Naive thymus-derived CD4-positive, alpha-beta T cell (primary cell): ENCODE measurements at regions of chr20 and their contacts with region 1.

Region 1: GRCh38 chr20:23350196-23350903 is at the start of gene NXT1:
- DNase-seq: peak; percentile 92 to 98 (median 95)
- ATAC-seq: peak; percentile 91
- H3K4me3 ChIP-seq: peak within 1 kb of the TSS; percentile 99
- H3K4me3 Mint-ChIP-seq: peak within 1 kb of the TSS; percentile 84 to 100 (median 98)
- H3K27ac ChIP-seq: peak within 1 kb of the TSS; percentile 99
- H3K27ac Mint-ChIP-seq: peak within 1 kb of the TSS; percentile 98 to 100 (median 100)
- H3K4me1 ChIP-seq: peaks cover 19 to 20% of the 10 kb centered on the region in 2 donors
- H3K4me1 Mint-ChIP-seq: peaks cover 12 to 36% (median 26%) of the 10 kb centered on the region in 7 donors
- H3K27me3 ChIP-seq: no peaks in the 10 kb centered on the region
- H3K27me3 Mint-ChIP-seq: peaks cover 0 to 2% (median 0%) of the 10 kb centered on the region in 5 donors
- total RNA-seq, gene NXT1: 20.1 to 63.4 (median 39.7) TPM

Region 2: DNA sequence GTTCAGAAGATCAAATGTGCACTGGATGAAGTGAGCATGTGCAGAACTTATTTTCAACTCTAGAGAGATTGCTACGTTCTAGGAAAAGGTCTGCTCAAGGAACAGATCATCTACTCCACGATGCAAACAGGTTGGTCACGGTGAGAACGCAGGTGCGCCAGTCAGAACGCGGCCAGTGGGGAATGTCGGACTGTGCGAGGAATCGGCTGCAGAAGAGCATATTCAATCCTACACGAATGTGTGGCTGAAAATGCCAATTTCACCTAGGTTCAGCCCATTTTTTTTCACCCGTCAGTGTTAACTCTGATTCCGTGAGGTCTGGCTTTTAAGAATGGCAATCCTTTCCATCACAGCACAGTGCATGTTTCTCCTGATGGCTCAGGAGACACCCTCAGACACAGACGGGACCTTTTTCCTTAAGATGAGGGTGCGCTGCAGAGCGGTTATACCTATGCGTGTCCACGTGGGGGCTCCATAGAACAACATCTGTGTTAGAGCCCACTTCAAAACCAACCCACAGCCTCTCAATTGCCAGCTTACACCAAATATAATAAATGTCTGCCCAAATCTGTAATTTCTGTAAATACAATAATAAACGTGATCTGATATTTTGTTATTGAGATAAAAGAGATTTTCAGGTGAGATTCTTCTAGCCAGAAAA is 1016.3 kb before region 1 on chr20:
- CTCF ChIA-PET with region 1: no interaction called
- POLR2A ChIA-PET with region 1: no interaction called
- intact Hi-C with region 1: loop called (anchors 10 kb)
- DNase-seq: peak in 5 of 9 donors; percentile 3 to 27 (median 23)
- ATAC-seq: peak; percentile 78
- H3K4me3 ChIP-seq: no peak overlapping the region
- H3K4me3 Mint-ChIP-seq: no peak overlapping the region
- H3K27ac ChIP-seq: no peak overlapping the region
- H3K27ac Mint-ChIP-seq: no peak overlapping the region
- H3K4me1 ChIP-seq: no peaks in the 10 kb centered on the region
- H3K4me1 Mint-ChIP-seq: peaks cover 0 to 1% (median under 1%) of the 10 kb centered on the region in 7 donors
- H3K27me3 ChIP-seq: no peaks in the 10 kb centered on the region
- H3K27me3 Mint-ChIP-seq: peaks cover under 1 to 37% (median 13%) of the 10 kb centered on the region in 5 donors

Region 3: GRCh38 chr20:23407781-23408464 is 57.6 kb after region 1 on chr20:
- CTCF ChIA-PET with region 1: no interaction called
- POLR2A ChIA-PET with region 1: no interaction called
- intact Hi-C with region 1: loop called in 1 of 2 experiments (anchors 1 kb)
- DNase-seq: peak in 2 of 9 donors; percentile 12 to 34
- ATAC-seq: peak; percentile 84
- H3K4me3 ChIP-seq: no peak overlapping the region
- H3K4me3 Mint-ChIP-seq: peak overlapping the region in 1 of 10 donors; percentile 65
- H3K27ac ChIP-seq: no peak overlapping the region
- H3K27ac Mint-ChIP-seq: peak overlapping the region in 3 of 9 donors; percentile 38 to 91 (median 41)
- H3K4me1 ChIP-seq: peaks cover 0 to 9% of the 10 kb centered on the region in 2 donors
- H3K4me1 Mint-ChIP-seq: peaks cover 23 to 60% (median 49%) of the 10 kb centered on the region in 7 donors
- H3K27me3 ChIP-seq: no peaks in the 10 kb centered on the region
- H3K27me3 Mint-ChIP-seq: no peaks in the 10 kb centered on the region

Region 4: DNA sequence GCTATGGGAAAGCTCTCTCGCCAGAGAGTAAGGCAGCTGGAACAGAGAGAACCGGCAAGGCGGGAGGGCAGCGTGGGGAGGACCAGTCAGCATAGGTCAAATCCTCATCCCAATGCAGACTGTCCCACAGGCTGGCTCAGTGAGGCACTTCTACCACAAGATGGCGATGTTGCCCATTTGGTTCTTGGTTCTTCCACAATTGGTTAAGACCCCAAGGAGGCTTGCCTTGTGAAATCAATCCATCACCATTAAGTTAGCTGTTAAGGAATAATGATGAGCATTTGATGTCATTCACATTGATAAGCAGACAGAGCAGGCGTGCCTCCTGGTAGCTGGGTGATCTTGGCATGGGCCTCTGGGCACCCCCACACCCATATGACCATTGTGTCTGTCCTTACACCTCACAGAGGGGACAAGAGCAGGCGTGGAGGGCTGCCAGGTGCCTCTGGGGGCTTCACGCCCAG is 91.5 kb after region 1 on chr20:
- CTCF ChIA-PET with region 1: interaction called, 5 read pairs
- POLR2A ChIA-PET with region 1: interaction called, 3 read pairs
- intact Hi-C with region 1: loop called in 1 of 2 experiments (anchors 1 kb)
- DNase-seq: peak in 8 of 9 donors; percentile 15 to 49 (median 29)
- ATAC-seq: peak; percentile 81
- H3K4me3 ChIP-seq: no peak overlapping the region
- H3K4me3 Mint-ChIP-seq: no peak overlapping the region
- H3K27ac ChIP-seq: no peak overlapping the region
- H3K27ac Mint-ChIP-seq: no peak overlapping the region
- H3K4me1 ChIP-seq: no peaks in the 10 kb centered on the region
- H3K4me1 Mint-ChIP-seq: peaks cover 0 to 4% (median 0%) of the 10 kb centered on the region in 7 donors
- H3K27me3 ChIP-seq: no peaks in the 10 kb centered on the region
- H3K27me3 Mint-ChIP-seq: peaks cover 0 to 2% (median 0%) of the 10 kb centered on the region in 5 donors

Region 5: DNA sequence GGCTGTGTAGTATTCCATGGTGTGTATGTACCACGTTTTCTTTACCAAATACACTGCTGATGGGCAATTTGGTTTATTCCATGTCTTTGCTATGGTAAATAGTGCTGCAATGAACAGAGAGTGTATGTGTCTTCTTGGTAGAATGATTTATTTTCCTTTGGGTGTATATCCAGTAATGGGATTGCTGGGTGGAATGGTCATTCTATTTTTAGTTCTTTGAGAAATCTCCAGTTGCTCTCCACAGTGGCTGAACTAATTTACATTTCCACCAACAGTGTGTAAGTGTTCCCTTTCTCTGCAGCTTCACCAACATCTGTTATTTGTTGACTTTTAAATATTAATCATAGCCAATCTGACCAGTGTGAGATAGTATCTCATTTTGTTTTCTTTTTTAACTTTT is 204.1 kb after region 1 on chr20:
- CTCF ChIA-PET with region 1: no interaction called
- POLR2A ChIA-PET with region 1: no interaction called
- intact Hi-C with region 1: no loop called
- DNase-seq: no peak
- ATAC-seq: no peak
- H3K4me3 ChIP-seq: no peak overlapping the region
- H3K4me3 Mint-ChIP-seq: no peak overlapping the region
- H3K27ac ChIP-seq: no peak overlapping the region
- H3K27ac Mint-ChIP-seq: no peak overlapping the region
- H3K4me1 ChIP-seq: no peaks in the 10 kb centered on the region
- H3K4me1 Mint-ChIP-seq: no peaks in the 10 kb centered on the region
- H3K27me3 ChIP-seq: no peaks in the 10 kb centered on the region
- H3K27me3 Mint-ChIP-seq: peaks cover under 1 to 33% (median 12%) of the 10 kb centered on the region in 5 donors

Region 6: DNA sequence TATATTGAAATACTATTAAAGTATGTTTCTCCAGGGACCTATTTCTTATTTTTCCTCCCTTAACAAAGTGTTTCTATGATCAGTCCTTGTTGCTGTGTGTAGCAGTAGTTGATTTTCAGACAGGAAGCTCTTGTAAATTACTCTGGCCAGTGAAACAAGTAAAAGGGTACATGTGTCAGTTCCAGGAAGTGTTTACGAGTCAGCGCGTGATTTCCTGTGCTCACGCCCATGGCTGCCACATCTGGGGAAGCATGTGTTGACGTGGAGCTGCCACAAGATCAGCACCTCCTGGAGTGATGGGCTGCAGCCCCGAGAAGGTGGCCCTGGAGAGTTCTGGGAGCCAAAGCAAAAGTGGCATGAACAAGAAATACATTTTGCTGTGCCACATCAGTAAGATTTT is 676.9 kb after region 1 on chr20:
- CTCF ChIA-PET with region 1: no interaction called
- POLR2A ChIA-PET with region 1: interaction called, 4 read pairs
- intact Hi-C with region 1: loop called (anchors 10 kb)
- DNase-seq: peak; percentile 45 to 93 (median 87)
- ATAC-seq: peak; percentile 99
- H3K4me3 ChIP-seq: peak overlapping the region; percentile 39
- H3K4me3 Mint-ChIP-seq: peak overlapping the region; percentile 26 to 81 (median 71)
- H3K27ac ChIP-seq: peak overlapping the region; percentile 83
- H3K27ac Mint-ChIP-seq: peak overlapping the region; percentile 95 to 99 (median 97)
- H3K4me1 ChIP-seq: peaks cover 17 to 29% of the 10 kb centered on the region in 2 donors
- H3K4me1 Mint-ChIP-seq: peaks cover 20 to 76% (median 62%) of the 10 kb centered on the region in 7 donors
- H3K27me3 ChIP-seq: no peaks in the 10 kb centered on the region
- H3K27me3 Mint-ChIP-seq: no peaks in the 10 kb centered on the region